Heart left ventricle (tissue), 16 donors: ENCODE measurements at regions of chr5 and their contacts with region 1.

Region 1: DNA sequence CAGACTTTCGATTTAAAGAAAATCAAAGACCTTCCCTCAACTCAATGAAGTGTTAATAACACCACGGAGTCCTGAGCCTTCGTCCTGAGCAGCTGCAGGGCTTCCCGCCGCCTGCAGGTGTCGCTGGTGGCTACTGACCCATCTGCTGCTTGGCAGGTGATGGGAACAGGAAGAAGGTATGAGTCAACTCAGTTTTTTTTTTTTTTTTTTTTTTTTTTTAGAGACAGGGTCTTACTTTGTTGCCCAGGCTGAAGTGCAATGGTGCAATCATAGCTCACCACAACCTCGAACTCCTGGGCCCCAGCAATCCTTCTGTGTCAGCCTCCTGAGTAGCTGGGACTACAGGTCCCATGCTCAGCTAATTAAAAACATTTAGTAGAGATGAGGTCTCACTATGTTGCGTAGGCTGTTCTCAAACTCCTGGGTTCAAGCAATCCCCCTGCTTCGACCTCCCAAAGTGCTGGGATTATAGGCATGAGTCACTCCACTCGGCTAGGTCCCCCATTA is 185.7 kb upstream of the IL12B start:
- DNase-seq: peak in 3 of 5 donors; percentile 27 to 55 (median 39)
- ATAC-seq: peak; percentile 46 to 87 (median 70)
- H3K4me3 ChIP-seq: no peak overlapping the region
- H3K27ac ChIP-seq: no peak overlapping the region
- H3K4me1 ChIP-seq: peaks cover 0 to 8% (median 0%) of the 10 kb centered on the region in 12 donors
- H3K27me3 ChIP-seq: no peaks in the 10 kb centered on the region
- CTCF ChIP-seq: peak; percentile 49 to 72 (median 65)
- POLR2A ChIP-seq: no peak

Region 2: DNA sequence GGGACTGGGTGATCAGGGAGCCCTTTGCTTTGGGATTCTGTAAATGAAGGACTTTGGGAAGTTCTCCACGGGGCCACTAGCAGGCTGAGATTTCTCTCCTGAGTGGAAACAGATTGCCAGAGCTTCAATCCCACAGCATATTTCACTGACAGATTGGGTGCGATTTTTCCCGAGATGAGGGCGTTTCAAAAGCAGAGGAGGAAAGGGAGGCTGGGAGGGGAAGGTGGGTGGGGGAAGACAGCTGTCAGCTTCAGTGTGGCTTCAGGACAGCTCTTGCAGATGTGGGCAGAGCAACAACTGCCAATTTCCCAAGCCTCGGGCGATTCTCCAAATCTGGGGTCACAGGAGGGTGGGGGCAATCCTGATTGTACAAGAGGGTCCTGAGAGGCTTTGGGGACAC is 141.8 kb after region 1 on chr5:
- intact Hi-C with region 1: loop called in 2 of 10 experiments (anchors 5 to 10 kb)
- DNase-seq: no peak
- ATAC-seq: no peak
- H3K4me3 ChIP-seq: no peak overlapping the region
- H3K27ac ChIP-seq: no peak overlapping the region
- H3K4me1 ChIP-seq: peaks cover 0 to 12% (median 4%) of the 10 kb centered on the region in 12 donors
- H3K27me3 ChIP-seq: no peaks in the 10 kb centered on the region
- CTCF ChIP-seq: no peak
- POLR2A ChIP-seq: no peak

Region 3: GRCh38 chr5:159773062-159773924 is 257.3 kb after region 1 on chr5:
- intact Hi-C with region 1: loop called in 4 of 10 experiments (anchors 10 kb)
- DNase-seq: peak; percentile 76 to 91 (median 89)
- ATAC-seq: peak; percentile 78 to 99 (median 97)
- H3K4me3 ChIP-seq: peak overlapping the region in 10 of 12 donors; percentile 26 to 57 (median 44)
- H3K27ac ChIP-seq: peak overlapping the region; percentile 40 to 91 (median 84)
- H3K4me1 ChIP-seq: peaks cover 0 to 15% (median 5%) of the 10 kb centered on the region in 12 donors
- H3K27me3 ChIP-seq: peaks cover 0 to 30% (median 0%) of the 10 kb centered on the region in 9 donors
- CTCF ChIP-seq: peak in 10 of 12 donors; percentile 9 to 57 (median 24)
- POLR2A ChIP-seq: peak; percentile 28 to 80

Region 4: DNA sequence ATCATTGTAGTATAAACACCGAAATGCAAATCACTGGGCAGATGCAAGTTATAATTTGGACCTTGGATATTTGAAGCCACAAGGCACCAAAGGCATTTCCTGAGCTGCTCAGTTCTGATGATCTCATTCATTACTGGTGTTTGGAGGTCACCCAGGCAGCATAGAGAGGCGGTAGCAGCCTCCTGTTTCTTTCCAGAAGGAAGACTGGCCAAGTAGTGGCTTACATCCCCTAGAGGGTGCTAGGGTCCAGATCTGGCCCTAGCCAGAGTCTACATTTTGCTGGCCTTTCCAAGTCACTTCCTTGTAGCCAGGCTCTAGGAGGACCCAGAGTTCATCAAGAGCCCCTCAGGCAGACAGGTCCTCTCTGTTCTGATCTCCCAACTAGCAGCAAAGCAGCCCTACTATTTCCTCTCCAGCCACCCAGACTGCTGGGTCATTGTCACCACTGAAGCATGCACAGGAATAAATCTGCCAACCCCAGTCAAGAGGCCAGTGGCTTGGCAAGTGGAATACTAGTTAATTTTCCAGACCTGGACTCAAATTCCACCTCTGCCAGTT is 459.6 kb after region 1 on chr5:
- intact Hi-C with region 1: loop called in 3 of 10 experiments (anchors 5 to 10 kb)
- DNase-seq: peak in 4 of 5 donors; percentile 22 to 37 (median 34)
- ATAC-seq: peak; percentile 44 to 89 (median 87)
- H3K4me3 ChIP-seq: no peak overlapping the region
- H3K27ac ChIP-seq: peak overlapping the region in 5 of 12 donors; percentile 9 to 41 (median 24)
- H3K4me1 ChIP-seq: peaks cover 0 to 13% (median 9%) of the 10 kb centered on the region in 12 donors
- H3K27me3 ChIP-seq: peaks cover 0 to 36% (median 17%) of the 10 kb centered on the region in 9 donors
- CTCF ChIP-seq: peak in 4 of 12 donors; percentile 11 to 51 (median 25)
- POLR2A ChIP-seq: no peak